Endothelial cell of umbilical vein (primary cell): ENCODE measurements at regions of chr5 and their contacts with region 1.

Region 1: DNA sequence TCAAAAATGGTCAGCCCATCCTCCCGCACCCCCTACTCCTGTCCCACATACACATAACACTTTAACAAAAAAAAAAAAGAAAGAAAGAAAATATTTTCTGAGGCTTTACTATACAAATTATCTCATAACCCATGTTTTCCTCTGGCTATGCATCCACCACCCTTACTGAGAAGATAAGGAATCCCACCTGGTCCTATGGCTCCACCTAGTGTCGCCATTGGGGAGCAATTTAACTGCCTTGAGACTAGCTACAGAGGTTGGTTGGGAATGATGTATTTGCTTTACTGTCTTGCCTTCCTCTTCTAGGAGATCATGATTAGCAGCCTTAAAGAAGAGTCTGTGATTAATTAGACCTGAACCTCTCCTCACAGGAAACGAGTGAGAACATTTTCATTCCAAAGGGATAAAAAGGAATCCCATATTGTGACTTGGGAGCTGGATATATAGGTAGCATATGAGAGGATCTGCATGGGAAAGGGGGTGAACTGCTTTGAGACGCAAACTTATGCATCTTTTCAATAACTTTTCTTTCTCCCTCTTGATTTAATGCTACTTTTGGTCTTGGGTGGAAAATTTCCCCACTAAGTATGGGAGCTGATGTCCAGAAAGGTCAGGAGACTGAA is 77.7 kb upstream of the SELENOP start:
- DNase-seq: peak; percentile 71
- H3K4me3 ChIP-seq: no peak overlapping the region
- H3K27ac ChIP-seq: no peak overlapping the region
- H3K4me1 ChIP-seq: no peaks in the 10 kb centered on the region
- H3K27me3 ChIP-seq: peaks cover 7 to 22% of the 10 kb centered on the region in 2 experiments
- CTCF ChIP-seq: peak; percentile 71 to 82
- POLR2A ChIP-seq: no peak

Region 2: DNA sequence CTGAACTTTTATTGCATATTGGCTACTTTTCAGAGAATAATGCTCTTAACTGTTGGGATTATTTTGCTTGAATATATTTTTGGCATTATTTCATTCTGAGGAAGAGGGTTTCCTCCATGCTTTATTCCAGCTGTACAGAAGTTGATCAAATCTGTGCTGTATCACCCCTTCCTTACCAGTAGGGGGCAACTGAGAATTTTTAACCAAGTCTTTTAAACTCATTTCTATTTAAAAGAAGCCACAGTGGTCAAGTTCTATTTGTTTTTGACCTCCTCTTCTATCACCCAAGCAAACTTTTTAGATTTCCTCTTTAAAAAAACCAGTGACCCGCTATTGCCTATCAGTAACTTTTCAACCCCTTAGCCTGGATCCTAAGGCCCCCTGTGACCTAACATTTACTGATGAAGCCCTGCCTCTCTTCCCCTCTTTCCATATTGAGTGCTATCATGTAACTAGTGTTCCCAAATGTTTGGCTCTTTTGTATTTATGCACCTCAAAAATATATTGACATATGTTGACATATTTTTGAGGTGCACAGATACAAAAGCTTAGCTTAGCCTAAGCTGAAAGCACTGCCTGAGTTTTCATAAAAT is 883.8 kb before region 1 on chr5:
- CTCF ChIA-PET with region 1: interaction called, 17 read pairs
- POLR2A ChIA-PET with region 1: no interaction called
- dilution Hi-C with region 1: no loop called
- intact Hi-C with region 1: loop called (anchors 5 kb)
- DNase-seq: peak; percentile 21
- H3K4me3 ChIP-seq: no peak overlapping the region
- H3K27ac ChIP-seq: no peak overlapping the region
- H3K4me1 ChIP-seq: no peaks in the 10 kb centered on the region
- H3K27me3 ChIP-seq: no peaks in the 10 kb centered on the region
- CTCF ChIP-seq: peak; percentile 49 to 60
- POLR2A ChIP-seq: no peak

Region 3: GRCh38 chr5:42583322-42583721 is 306.1 kb before region 1 on chr5:
- CTCF ChIA-PET with region 1: interaction called, 55 read pairs
- POLR2A ChIA-PET with region 1: no interaction called
- dilution Hi-C with region 1: no loop called
- intact Hi-C with region 1: loop called (anchors 5 kb)
- DNase-seq: peak; percentile 59
- H3K4me3 ChIP-seq: no peak overlapping the region
- H3K27ac ChIP-seq: no peak overlapping the region
- H3K4me1 ChIP-seq: no peaks in the 10 kb centered on the region
- H3K27me3 ChIP-seq: peaks cover 2 to 5% of the 10 kb centered on the region in 2 experiments
- CTCF ChIP-seq: peak; percentile 73 to 75
- POLR2A ChIP-seq: no peak

Region 4: GRCh38 chr5:42745426-42745825 is 144.0 kb before region 1 on chr5:
- CTCF ChIA-PET with region 1: interaction called, 5 read pairs
- POLR2A ChIA-PET with region 1: no interaction called
- dilution Hi-C with region 1: no loop called
- intact Hi-C with region 1: loop called (anchors 1 kb)
- DNase-seq: no peak
- H3K4me3 ChIP-seq: no peak overlapping the region
- H3K27ac ChIP-seq: no peak overlapping the region
- H3K4me1 ChIP-seq: no peaks in the 10 kb centered on the region
- H3K27me3 ChIP-seq: peaks cover 0 to 2% of the 10 kb centered on the region in 2 experiments
- CTCF ChIP-seq: peak; percentile 40 to 49
- POLR2A ChIP-seq: no peak

Region 5: DNA sequence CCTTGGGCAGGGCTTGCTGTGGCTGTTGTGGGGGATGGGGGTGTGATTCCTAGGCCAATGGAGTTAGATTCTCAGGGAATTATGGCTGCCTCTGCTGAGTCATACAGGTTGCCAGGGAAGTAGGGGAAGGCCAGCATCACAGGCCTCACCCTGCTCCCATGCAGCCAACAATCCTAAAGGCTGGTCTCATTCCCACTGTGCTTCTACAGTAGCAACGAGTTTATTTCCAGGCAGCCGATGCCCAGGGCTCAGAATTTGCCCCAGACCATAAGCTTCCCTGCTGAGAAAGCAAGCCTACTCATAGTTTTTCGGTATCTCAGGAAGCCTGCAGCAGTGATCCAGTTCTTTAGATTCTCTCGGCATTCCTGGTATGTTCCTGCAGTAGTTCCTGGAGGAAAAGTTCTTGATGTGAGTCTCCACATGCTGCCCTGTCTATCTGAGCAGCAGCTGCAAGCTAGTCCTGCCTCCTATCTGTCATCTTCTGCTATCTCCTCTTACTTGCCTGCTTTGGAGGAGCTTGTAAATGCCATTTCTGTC is 18.5 kb before region 1 on chr5:
- CTCF ChIA-PET with region 1: interaction called, 19 read pairs
- POLR2A ChIA-PET with region 1: no interaction called
- dilution Hi-C with region 1: no loop called
- intact Hi-C with region 1: no loop called
- DNase-seq: no peak
- H3K4me3 ChIP-seq: no peak overlapping the region
- H3K27ac ChIP-seq: no peak overlapping the region
- H3K4me1 ChIP-seq: peaks cover 5% of the 10 kb centered on the region
- H3K27me3 ChIP-seq: no peaks in the 10 kb centered on the region
- CTCF ChIP-seq: no peak
- POLR2A ChIP-seq: no peak